ENCODE measurements at regions of chr14 and their contacts with region 1.

Region 1: GRCh38 chr14:97408937-97409815 is 612.0 kb downstream of the VRK1 start:
- DNase-seq: peak; percentile 74
- ATAC-seq: peak; percentile 86
- H3K4me3 Mint-ChIP-seq: peak overlapping the region; percentile 57
- H3K27ac Mint-ChIP-seq: peak overlapping the region; percentile 89
- H3K4me1 Mint-ChIP-seq: peaks cover 32% of the 10 kb centered on the region
- H3K27me3 Mint-ChIP-seq: peaks cover 4% of the 10 kb centered on the region

Region 2: DNA sequence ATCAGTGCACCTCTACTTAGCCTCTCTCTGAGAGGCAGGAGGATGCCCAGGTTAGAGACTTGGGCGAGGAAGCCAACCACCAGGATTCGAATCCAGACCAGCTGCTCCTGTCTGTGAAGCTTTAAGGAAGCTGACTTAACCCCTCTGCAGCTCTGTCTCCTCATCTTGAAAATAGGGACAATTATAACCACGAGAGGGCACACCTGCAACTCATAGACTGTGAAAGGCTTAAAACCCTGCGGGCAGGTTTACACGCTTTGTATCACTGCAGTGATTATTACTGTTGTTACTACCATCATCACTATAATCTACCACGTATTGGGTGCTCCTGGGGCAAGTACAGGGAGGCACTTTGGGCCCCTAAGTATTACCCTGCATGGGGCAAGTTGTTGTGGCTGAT is 232.2 kb before region 1 on chr14:
- CTCF ChIA-PET with region 1: no interaction called
- POLR2A ChIA-PET with region 1: no interaction called
- intact Hi-C with region 1: loop called in 1 of 2 experiments (anchors 5 kb)
- DNase-seq: peak; percentile 46
- ATAC-seq: peak; percentile 25
- H3K4me3 Mint-ChIP-seq: no peak overlapping the region
- H3K27ac Mint-ChIP-seq: peak overlapping the region; percentile 34
- H3K4me1 Mint-ChIP-seq: peaks cover 34% of the 10 kb centered on the region
- H3K27me3 Mint-ChIP-seq: no peaks in the 10 kb centered on the region

Region 3: DNA sequence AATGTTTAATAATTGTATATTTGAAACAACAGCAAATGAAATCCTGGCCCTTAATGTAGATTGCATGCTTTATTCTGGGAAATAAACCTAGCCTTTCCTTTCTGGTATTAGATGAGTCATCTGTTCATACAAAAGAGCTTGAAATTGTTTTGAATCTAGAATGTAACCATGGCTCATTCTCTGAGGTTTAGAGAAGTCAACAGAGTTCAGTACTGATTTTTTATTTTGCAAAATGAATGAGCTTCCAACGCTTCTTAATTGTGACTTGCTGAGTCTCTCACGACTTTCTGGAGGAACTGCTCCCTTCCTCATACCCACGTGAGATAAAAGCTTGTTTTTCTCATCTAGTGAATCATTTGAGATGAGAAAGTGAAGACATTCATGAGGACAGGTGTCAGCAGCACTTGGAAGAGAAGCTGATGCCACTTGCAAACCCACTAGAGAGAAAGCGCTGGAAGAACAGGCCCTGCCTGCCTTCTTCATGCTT is 102.4 kb before region 1 on chr14:
- CTCF ChIA-PET with region 1: no interaction called
- POLR2A ChIA-PET with region 1: interaction called, 3 read pairs
- intact Hi-C with region 1: loop called (anchors 1 to 2 kb)
- DNase-seq: peak; percentile 41
- ATAC-seq: peak; percentile 85
- H3K4me3 Mint-ChIP-seq: no peak overlapping the region
- H3K27ac Mint-ChIP-seq: peak overlapping the region; percentile 90
- H3K4me1 Mint-ChIP-seq: peaks cover 31% of the 10 kb centered on the region
- H3K27me3 Mint-ChIP-seq: no peaks in the 10 kb centered on the region

Region 4: DNA sequence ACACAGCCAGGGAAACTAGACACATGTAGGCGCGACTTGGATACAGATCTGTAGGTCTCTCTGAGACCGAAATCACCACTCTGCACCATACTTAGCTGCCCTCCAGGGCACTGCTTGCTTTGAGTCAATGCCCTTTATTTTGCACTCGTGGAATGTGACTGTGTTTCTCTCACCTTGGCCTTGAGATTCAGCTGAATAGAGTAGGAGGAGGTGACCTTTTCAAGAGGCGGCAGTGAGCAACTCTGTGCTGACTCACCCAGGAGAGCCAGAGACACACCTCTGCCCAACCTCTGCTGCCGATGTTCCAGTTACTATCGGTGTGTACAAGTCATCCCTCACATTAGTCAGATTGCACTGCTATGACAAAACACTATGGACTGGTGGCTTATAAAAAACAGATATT is 28.6 kb before region 1 on chr14:
- CTCF ChIA-PET with region 1: interaction called, 3 read pairs
- POLR2A ChIA-PET with region 1: no interaction called
- intact Hi-C with region 1: loop called (anchors 1 kb)
- DNase-seq: peak; percentile 88
- ATAC-seq: peak; percentile 99
- H3K4me3 Mint-ChIP-seq: no peak overlapping the region
- H3K27ac Mint-ChIP-seq: no peak overlapping the region
- H3K4me1 Mint-ChIP-seq: peaks cover 46% of the 10 kb centered on the region
- H3K27me3 Mint-ChIP-seq: no peaks in the 10 kb centered on the region

Region 5: GRCh38 chr14:97724265-97724731 is 315.1 kb after region 1 on chr14:
- CTCF ChIA-PET with region 1: no interaction called
- POLR2A ChIA-PET with region 1: no interaction called
- intact Hi-C with region 1: loop called in 1 of 2 experiments (anchors 5 kb)
- DNase-seq: peak; percentile 63
- ATAC-seq: peak; percentile 93
- H3K4me3 Mint-ChIP-seq: peak overlapping the region; percentile 72
- H3K27ac Mint-ChIP-seq: peak overlapping the region; percentile 98
- H3K4me1 Mint-ChIP-seq: peaks cover 76% of the 10 kb centered on the region
- H3K27me3 Mint-ChIP-seq: no peaks in the 10 kb centered on the region

Measured in activated CD4-positive, alpha-beta T cell treated with anti-CD3 and anti-CD28 coated beads for 36 hours (primary cell).